ENCODE measurements at regions of chr17 and their contacts with region 1.

Region 1: DNA sequence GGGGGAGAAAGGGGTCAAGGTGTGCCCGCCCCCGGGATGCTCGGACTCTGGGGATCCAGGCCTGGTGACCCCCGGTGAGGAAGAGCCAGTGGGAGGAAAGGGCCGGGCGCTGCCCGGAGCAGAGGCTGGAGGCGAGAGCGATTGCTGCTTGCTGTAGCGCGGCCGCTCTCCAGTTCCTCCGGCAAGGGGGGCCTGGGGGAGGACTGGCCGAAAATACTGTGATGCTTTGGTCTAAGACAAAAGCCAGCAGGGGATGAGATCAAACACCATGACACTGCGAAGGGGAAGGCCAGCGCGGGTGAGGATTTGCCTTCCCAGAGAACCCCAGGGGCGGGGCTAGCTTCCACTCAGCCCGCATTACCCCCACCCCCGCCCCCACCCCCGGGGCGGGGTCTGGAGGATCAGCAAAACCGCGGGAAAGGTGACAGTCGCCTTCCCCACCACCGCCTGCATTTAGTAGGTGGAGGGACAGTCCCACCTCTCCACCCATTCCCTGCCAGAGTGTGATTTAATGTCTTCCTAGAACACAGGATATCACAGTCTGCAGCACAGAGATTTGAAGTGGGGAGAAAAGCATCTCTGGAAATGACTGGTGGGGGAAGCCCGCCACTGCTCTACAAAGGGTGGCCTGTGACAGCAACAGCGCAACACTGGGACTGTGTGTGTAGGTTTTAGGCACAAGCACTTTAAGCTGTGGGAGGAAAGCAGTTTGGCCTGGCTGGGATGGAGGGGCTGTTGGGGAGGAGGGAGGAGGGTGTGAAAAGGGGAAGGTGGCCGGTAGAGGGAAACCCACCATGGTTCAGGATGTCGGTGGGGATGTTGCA is 25.7 kb downstream of the MRC2 start:
- DNase-seq: peak; percentile 98
- H3K4me3 Mint-ChIP-seq: peak overlapping the region; percentile 76
- H3K27ac Mint-ChIP-seq: peak overlapping the region; percentile 69
- H3K4me1 Mint-ChIP-seq: peaks cover 19% of the 10 kb centered on the region
- H3K27me3 Mint-ChIP-seq: peaks cover 39% of the 10 kb centered on the region

Region 2: GRCh38 chr17:62562656-62563055 is 90.6 kb before region 1 on chr17:
- CTCF ChIA-PET with region 1: no interaction called
- intact Hi-C with region 1: loop called (anchors 2 kb)
- DNase-seq: no peak
- H3K4me3 Mint-ChIP-seq: no peak overlapping the region
- H3K27ac Mint-ChIP-seq: no peak overlapping the region
- H3K4me1 Mint-ChIP-seq: peaks cover 24% of the 10 kb centered on the region
- H3K27me3 Mint-ChIP-seq: no peaks in the 10 kb centered on the region

Region 3: GRCh38 chr17:62627911-62628633 is 25.1 kb before region 1 on chr17:
- CTCF ChIA-PET with region 1: no interaction called
- intact Hi-C with region 1: loop called (anchors 1 kb)
- DNase-seq: peak; percentile 57
- H3K4me3 Mint-ChIP-seq: peak overlapping the region; percentile 84
- H3K27ac Mint-ChIP-seq: no peak overlapping the region
- H3K4me1 Mint-ChIP-seq: peaks cover 5% of the 10 kb centered on the region
- H3K27me3 Mint-ChIP-seq: peaks cover 21% of the 10 kb centered on the region

Region 4: GRCh38 chr17:63275318-63275970 is 622.2 kb after region 1 on chr17:
- CTCF ChIA-PET with region 1: no interaction called
- intact Hi-C with region 1: loop called (anchors 1 kb)
- DNase-seq: peak; percentile 52
- H3K4me3 Mint-ChIP-seq: no peak overlapping the region
- H3K27ac Mint-ChIP-seq: no peak overlapping the region
- H3K4me1 Mint-ChIP-seq: peaks cover 32% of the 10 kb centered on the region
- H3K27me3 Mint-ChIP-seq: no peaks in the 10 kb centered on the region